Activated naive CD4-positive, alpha-beta T cell treated with anti-CD3 and anti-CD28 coated beads, Interleukin-2, amount 10 ng/mL, durations not matched to agents 7 days and 5 days (primary cell): ENCODE measurements at regions of chr3 and their contacts with region 1.

Region 1: DNA sequence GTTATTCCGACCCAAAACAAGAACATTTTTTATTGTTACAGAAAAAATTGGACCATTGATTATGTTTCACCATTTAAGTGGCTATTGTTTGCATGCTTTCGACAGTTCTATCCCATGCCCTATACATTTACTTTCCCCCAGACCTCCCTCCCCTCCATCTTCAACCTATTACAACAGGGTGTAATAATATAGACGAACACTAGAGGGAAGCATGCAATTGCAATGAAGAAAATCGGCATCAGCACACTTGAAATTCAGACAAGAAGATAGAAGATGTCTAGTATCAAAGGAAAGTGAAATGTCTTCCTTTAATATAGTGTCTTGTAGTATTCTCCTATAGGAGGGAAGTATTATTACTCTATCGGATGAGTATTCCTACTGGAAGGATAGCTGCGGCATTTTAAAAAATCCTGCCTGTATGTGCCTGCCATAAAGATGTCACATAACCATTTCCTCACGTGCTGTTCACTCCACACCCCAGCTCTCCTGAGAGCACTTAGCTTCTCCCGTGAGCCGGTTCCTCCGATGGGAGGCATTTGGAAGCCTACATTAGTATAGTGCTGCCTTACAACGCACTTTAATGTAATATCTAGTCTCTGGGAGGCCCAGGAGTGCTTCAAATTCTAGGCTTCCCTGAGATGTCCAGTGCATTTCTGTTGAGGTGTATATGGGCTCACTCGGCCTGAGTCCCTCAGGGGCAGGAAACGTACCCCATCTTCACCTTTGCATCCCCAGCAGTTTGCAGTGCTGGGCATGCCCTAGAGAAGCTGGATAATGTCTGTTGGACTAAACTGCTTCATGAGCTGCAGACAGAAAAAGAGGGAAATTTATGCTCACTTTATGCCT is 17.8 kb upstream of the ERICH6 start:
- DNase-seq: no peak
- H3K4me3 Mint-ChIP-seq: no peak overlapping the region
- H3K27ac Mint-ChIP-seq: no peak overlapping the region
- H3K4me1 Mint-ChIP-seq: peaks cover 14% of the 10 kb centered on the region
- H3K27me3 Mint-ChIP-seq: no peaks in the 10 kb centered on the region

Region 2: DNA sequence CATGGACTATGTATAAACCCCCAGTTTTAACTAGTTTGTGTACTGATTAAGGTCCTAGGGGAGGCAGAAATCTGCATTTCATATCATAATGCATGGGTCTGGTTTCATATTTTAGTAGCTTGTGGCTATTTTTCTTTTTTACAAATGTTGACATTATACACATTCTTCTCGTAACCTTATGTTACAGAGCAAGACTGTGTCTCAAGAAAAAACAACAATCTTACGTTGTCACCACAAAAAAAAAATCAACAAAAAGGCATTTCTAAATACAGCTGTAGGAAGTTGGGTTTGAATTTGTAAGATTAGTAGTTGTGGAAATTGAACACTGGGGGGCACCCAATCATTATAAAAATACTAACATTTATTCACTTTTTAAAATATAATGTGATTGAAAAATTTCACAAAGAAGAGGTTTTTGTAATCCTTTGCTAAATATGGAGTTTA is 193.1 kb before region 1 on chr3:
- CTCF ChIA-PET with region 1: interaction called, 10 read pairs
- DNase-seq: no peak
- H3K4me3 Mint-ChIP-seq: no peak overlapping the region
- H3K27ac Mint-ChIP-seq: no peak overlapping the region
- H3K4me1 Mint-ChIP-seq: peaks cover 6% of the 10 kb centered on the region
- H3K27me3 Mint-ChIP-seq: peaks cover 2% of the 10 kb centered on the region

Region 3: DNA sequence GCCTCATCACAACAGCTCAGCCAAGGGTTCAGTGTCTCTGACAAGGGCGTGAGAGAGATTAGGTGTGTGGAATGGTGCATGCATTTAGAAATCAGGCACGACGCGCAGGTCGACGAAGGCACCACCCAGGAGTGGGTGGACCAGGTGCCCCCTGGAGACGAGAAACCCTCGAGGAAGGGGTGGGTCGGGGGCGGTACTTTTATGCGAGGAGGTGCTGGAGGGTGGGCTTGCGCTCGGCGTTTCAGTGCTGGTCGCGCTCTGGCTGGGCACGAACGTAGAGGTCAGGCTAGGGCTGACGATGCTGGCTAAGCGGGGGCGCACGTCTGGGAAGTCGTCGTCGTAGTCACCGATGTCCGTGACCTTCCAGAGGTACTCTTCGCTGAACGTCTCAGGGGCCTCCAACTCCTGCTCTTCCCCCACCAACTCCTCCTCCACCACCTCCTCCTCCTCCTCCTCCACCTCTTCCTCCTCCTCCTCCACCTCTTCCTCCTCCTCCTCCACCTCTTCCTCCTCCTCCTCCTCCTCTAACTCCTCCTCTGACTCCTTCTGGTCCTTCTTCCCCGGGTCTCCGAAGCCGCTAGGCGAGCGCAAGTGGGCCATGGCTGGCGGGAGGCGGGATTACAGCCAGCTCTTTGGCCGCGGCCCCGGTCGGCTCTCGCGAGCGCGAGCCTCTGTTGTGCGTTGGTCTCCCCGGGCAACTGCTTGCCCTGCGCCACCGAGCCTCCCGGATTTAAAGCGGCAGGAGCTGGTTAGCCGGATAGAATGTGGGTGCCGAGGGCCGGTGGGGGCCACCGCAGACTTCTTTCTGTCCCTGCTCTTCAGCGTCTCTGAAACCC is 18.0 kb before region 1 on chr3 and contains the start of gene ERICH6:
- CTCF ChIA-PET with region 1: interaction called, 15 read pairs
- DNase-seq: peak; percentile 91
- H3K4me3 Mint-ChIP-seq: peak within 1 kb of the TSS; percentile 97
- H3K27ac Mint-ChIP-seq: peak within 1 kb of the TSS; percentile 92
- H3K4me1 Mint-ChIP-seq: peaks cover 27% of the 10 kb centered on the region
- H3K27me3 Mint-ChIP-seq: peaks cover 40% of the 10 kb centered on the region

Region 4: GRCh38 chr3:150763122-150763841 is 41.8 kb after region 1 on chr3 and contains the start of gene SIAH2:
- CTCF ChIA-PET with region 1: interaction called, 28 read pairs
- DNase-seq: peak; percentile 94
- H3K4me3 Mint-ChIP-seq: peak within 1 kb of the TSS; percentile 94
- H3K27ac Mint-ChIP-seq: peak within 1 kb of the TSS; percentile 100
- H3K4me1 Mint-ChIP-seq: peaks cover 46% of the 10 kb centered on the region
- H3K27me3 Mint-ChIP-seq: peaks cover 6% of the 10 kb centered on the region

Region 5: DNA sequence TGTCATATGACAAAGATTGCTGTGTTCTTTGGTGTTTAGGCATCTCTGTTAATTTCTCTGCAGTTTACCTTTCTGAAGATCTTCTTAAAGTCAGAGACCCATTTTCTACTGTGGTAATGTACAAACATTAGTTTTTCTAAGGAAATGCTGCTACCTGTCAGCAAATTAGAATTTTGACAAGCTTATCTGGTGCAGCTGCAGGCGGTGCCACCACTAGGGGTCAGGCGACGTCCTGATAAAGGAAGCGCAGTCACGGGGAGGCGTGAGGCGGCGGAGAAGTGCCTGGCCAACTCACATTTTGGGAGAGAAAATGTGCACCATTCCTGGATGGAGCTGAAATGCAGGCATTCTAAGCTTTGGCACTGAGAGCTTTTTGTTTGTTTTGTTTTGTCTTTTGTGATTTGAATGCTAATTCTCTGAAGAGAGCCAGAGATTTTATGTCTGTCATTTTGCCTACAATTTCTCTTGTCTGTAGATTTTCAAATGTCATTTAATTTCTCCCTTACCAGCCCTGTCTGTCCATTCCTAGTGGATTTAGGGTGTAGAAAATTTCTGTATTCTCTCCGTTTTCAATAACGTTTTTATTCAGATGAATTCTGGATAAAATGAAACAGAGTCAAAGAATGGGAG is 66.3 kb after region 1 on chr3:
- CTCF ChIA-PET with region 1: interaction called, 27 read pairs
- DNase-seq: peak; percentile 86
- H3K4me3 Mint-ChIP-seq: no peak overlapping the region
- H3K27ac Mint-ChIP-seq: no peak overlapping the region
- H3K4me1 Mint-ChIP-seq: peaks cover 7% of the 10 kb centered on the region
- H3K27me3 Mint-ChIP-seq: peaks cover 12% of the 10 kb centered on the region

Region 6: DNA sequence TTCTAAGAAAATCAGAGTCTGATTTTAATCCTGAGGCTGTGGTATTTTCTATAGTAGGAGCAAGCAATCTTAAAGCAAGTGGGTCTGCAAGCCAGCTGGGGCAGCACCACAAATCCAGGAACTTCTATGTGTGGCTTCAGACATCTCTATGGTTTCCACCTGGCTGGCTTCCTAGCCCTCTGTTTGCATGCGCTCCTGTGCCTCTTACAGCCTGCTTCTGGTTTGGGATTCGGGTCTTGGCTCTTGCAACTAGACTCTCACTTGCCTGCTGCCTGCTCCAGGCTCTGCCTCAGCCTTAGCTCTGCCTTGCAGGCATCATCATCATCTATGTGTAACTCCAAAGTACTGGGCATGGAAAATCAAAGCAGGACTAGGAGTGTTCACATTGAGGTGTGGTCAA is 140.3 kb after region 1 on chr3:
- CTCF ChIA-PET with region 1: interaction called, 32 read pairs
- DNase-seq: no peak
- H3K4me3 Mint-ChIP-seq: no peak overlapping the region
- H3K27ac Mint-ChIP-seq: no peak overlapping the region
- H3K4me1 Mint-ChIP-seq: no peaks in the 10 kb centered on the region
- H3K27me3 Mint-ChIP-seq: peaks cover 19% of the 10 kb centered on the region